ENCODE measurements at regions of chr22 and their contacts with region 1.

Region 1: DNA sequence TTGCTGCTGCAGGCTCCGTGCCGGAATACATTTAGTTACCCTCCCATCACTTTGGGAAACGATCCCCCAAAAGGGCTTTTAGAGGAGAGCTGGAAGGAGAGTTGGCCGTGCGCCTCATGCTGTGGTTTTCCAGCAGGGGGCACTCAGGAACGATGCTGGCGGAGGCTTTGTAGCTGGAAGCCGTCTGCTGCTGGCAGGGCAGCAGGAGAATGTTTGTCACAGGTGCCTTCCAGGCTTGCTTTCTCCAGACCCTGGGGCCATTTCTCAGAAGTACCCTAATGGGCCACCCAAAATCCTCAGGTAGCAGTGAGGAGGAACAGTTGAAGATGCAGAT is 30.0 kb upstream of the CABP7 start:
- DNase-seq: peak; percentile 20 to 62
- ATAC-seq: peak; percentile 39 to 93
- H3K4me3 ChIP-seq: no peak overlapping the region
- H3K27ac ChIP-seq: no peak overlapping the region
- H3K4me1 ChIP-seq: peaks cover 7 to 13% of the 10 kb centered on the region in 2 donors
- H3K27me3 ChIP-seq: no peaks in the 10 kb centered on the region
- CTCF ChIP-seq: peak; percentile 48 to 78 (median 70)
- POLR2A ChIP-seq: no peak

Region 2: GRCh38 chr22:30089655-30089974 is 399.8 kb after region 1 on chr22:
- in situ Hi-C with region 1: no loop called
- intact Hi-C with region 1: loop called (anchors 2 kb)
- DNase-seq: no peak
- ATAC-seq: peak; percentile 36 to 45
- H3K4me3 ChIP-seq: no peak overlapping the region
- H3K27ac ChIP-seq: no peak overlapping the region
- H3K4me1 ChIP-seq: peaks cover 0 to 7% of the 10 kb centered on the region in 2 donors
- H3K27me3 ChIP-seq: peaks cover 0 to 10% (median 2%) of the 10 kb centered on the region in 3 donors
- CTCF ChIP-seq: no peak
- POLR2A ChIP-seq: no peak

Measured in gastrocnemius medialis (tissue), 4 donors.